ENCODE measurements at regions of chr9 and their contacts with region 1.

Region 1: DNA sequence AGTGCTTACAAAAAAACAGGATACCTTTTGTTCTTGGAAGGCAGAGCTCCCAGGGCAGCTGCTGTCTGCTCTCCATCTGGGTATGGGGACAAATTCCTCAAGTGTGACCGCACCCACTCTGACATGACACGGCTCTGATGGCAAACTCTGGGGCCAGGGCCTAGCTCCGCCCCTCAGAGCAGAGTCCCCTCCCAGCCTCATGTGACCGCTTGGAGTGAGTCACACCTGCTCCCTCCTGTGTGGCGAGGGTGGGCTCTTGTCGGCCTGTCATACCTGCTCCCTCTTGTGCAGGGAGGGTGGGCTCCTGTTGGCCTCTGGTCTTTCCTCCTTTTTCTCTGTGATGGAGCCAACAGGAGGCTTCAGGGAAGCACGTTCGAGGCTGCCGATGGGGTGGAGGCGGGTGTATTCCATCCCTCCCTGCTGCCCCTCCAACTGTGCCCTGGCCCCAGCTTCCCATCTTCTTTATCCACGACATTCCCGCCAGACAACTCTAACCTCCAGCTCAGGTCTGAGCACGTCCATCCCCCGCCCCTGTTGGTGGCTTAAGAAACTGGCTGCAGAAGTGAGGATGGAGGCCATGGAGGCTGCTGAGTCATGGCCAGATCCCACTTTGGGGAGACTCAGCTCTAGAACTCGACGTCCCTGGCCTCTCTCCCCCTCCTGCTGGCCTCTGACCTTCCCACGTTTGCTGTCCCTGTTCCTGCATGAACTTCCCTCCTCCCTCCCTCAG is 65.3 kb downstream of the OLFM1 start:
- DNase-seq: peak; percentile 27 to 60
- H3K4me3 ChIP-seq: no peak overlapping the region
- H3K27ac ChIP-seq: no peak overlapping the region
- H3K4me1 ChIP-seq: peaks cover 0 to 12% (median 7%) of the 10 kb centered on the region in 4 experiments; a peak in 5 of 7 replicates
- H3K27me3 ChIP-seq: no peaks in the 10 kb centered on the region; a peak in 2 of 7 replicates
- CTCF ChIP-seq: no peak
- EP300 ChIP-seq: no peak
- POLR2A ChIP-seq: no peak
- RAD21 ChIP-seq: no peak

Region 2: DNA sequence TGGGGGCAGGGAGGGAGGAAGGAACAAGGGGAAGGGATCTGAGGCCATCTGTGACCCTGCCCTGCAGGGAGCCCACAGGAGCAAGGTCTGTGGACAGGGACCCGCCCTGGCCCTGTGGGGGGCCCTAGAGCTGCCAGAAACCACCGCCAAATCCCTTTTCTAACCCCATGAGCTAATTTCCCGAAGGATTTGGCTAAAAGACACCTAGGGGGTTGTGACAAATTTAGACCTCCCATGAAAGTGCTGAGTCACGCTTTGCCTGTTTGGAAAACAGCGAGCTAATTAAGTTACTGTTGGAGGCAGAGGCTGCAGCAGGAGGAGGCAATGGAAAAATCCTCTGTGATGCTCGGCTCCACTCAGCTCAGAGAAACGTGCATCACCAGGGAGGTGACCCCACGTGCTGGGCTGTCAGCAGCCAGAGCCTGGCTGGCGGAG is 15.4 kb before region 1 on chr9:
- CTCF ChIA-PET with region 1: interaction called, 13 read pairs
- POLR2A ChIA-PET with region 1: interaction called, 5 read pairs
- DNase-seq: no peak
- H3K4me3 ChIP-seq: no peak overlapping the region
- H3K27ac ChIP-seq: no peak overlapping the region
- H3K4me1 ChIP-seq: peaks cover 2 to 9% (median 5%) of the 10 kb centered on the region in 4 experiments
- H3K27me3 ChIP-seq: peaks cover 0 to 4% (median 0%) of the 10 kb centered on the region in 4 experiments; a peak in 3 of 7 replicates
- CTCF ChIP-seq: no peak
- EP300 ChIP-seq: no peak
- POLR2A ChIP-seq: no peak
- RAD21 ChIP-seq: no peak

Region 3: DNA sequence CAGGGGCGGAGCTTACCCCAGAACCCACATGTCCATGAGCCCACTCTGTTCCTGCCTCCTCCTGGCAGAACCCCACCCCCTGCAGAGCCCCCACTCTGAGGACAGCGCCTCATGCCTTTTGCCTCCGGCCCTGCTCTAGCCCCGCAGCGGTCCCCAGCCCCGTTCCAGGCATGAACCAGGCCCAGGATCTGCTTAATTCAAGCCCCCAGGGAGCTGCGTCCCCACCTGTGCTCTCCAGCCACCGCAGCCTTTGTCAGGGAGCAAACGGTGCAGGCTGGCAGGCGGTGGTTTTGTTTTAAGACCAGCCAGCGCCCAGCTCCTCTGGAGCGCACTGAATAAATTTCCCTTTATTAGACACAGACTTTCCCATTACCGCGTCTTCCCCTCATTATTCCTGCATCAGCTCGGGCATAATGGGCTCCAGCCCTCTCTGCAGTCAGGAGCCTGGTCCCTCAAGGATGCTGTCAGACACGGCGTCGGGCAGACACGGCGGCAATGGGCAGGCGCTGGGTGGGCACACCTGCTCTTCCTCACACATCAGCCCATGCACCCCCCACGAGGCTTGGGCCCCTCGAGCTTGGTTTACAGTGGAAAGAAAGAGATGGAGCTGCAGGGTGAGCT is 72.3 kb after region 1 on chr9:
- CTCF ChIA-PET with region 1: no interaction called
- POLR2A ChIA-PET with region 1: no interaction called
- DNase-seq: no peak
- H3K4me3 ChIP-seq: no peak overlapping the region
- H3K27ac ChIP-seq: no peak overlapping the region; the same call in 1 of the 2 replicates
- H3K4me1 ChIP-seq: peaks cover 2 to 27% (median 19%) of the 10 kb centered on the region in 4 experiments
- H3K27me3 ChIP-seq: no peaks in the 10 kb centered on the region; a peak in 1 of 7 replicates
- CTCF ChIP-seq: no peak
- EP300 ChIP-seq: no peak
- POLR2A ChIP-seq: no peak
- RAD21 ChIP-seq: no peak